CD8-positive, alpha-beta T cell (primary cell): ENCODE measurements at regions of chr7 and their contacts with region 1.

Region 1: GRCh38 chr7:157432957-157433576 is 96.3 kb downstream of the DNAJB6 start:
- DNase-seq: peak; percentile 24 to 83 (median 60)
- ATAC-seq: peak; percentile 87
- H3K4me3 ChIP-seq: peak overlapping the region; percentile 14 to 25
- H3K4me3 Mint-ChIP-seq: peak overlapping the region; percentile 55
- H3K27ac ChIP-seq: no peak overlapping the region
- H3K27ac Mint-ChIP-seq: no peak overlapping the region
- H3K4me1 ChIP-seq: peaks cover 11% of the 10 kb centered on the region
- H3K4me1 Mint-ChIP-seq: peaks cover 13% of the 10 kb centered on the region
- H3K27me3 ChIP-seq: no peaks in the 10 kb centered on the region
- H3K27me3 Mint-ChIP-seq: no peaks in the 10 kb centered on the region
- CTCF ChIP-seq: peak; percentile 67

Region 2: DNA sequence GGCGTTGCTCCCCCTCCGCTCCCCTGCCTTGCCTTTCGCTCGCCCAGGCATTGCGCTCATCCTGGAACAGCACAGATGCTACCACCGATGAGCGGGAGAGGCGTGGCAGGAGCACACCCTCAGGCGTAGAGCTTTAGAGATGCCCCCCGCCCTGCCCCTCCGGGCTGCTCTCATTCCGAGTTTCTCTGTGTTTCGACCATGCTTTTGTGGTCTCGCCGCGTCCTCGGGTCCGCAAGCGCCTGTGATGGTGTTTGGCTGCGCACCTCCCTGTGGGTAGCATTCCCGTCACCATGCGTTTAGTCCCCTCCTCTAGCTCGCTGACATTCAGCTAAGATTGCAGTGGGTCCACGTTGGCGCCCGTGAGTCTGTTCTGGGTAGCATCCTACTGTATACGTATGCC is 464.9 kb before region 1 on chr7:
- CTCF ChIA-PET with region 1: no interaction called
- POLR2A ChIA-PET with region 1: no interaction called
- intact Hi-C with region 1: no loop called
- DNase-seq: no peak
- ATAC-seq: no peak
- H3K4me3 ChIP-seq: no peak overlapping the region
- H3K4me3 Mint-ChIP-seq: no peak overlapping the region
- H3K27ac ChIP-seq: no peak overlapping the region
- H3K27ac Mint-ChIP-seq: no peak overlapping the region
- H3K4me1 ChIP-seq: no peaks in the 10 kb centered on the region
- H3K4me1 Mint-ChIP-seq: no peaks in the 10 kb centered on the region
- H3K27me3 ChIP-seq: no peaks in the 10 kb centered on the region
- H3K27me3 Mint-ChIP-seq: no peaks in the 10 kb centered on the region
- CTCF ChIP-seq: no peak

Region 3: DNA sequence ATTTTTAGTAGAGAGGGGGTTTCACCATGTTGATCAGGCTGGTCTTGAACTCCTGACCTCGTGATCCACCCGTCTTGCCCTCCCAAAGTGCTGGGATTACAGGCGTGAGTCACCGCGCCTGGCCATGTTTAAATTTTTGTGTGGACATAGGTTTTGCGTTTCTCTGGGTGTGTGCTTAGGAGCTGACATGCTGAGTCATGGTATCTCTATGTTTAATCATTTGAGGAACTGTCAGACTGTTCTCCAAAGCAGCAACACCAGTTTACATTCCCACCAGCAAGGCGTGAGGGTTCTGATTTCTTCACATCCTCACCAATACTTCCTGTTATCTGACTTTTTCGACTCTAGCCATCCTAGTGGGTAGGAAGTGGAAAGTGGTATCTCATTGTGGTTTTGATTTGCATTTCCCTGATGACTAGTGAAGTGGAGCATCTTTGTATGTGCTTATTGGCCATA is 57.4 kb after region 1 on chr7:
- CTCF ChIA-PET with region 1: interaction called, 6 read pairs
- POLR2A ChIA-PET with region 1: no interaction called
- intact Hi-C with region 1: loop called in 1 of 2 experiments (anchors 1 kb)
- DNase-seq: peak in 7 of 9 experiments; percentile 30 to 88 (median 54)
- ATAC-seq: peak; percentile 89
- H3K4me3 ChIP-seq: no peak overlapping the region
- H3K4me3 Mint-ChIP-seq: peak overlapping the region; percentile 27
- H3K27ac ChIP-seq: no peak overlapping the region
- H3K27ac Mint-ChIP-seq: peak overlapping the region; percentile 84
- H3K4me1 ChIP-seq: peaks cover 21% of the 10 kb centered on the region
- H3K4me1 Mint-ChIP-seq: peaks cover 29% of the 10 kb centered on the region
- H3K27me3 ChIP-seq: peaks cover 0 to 3% of the 10 kb centered on the region in 2 experiments
- H3K27me3 Mint-ChIP-seq: no peaks in the 10 kb centered on the region
- CTCF ChIP-seq: no peak

Region 4: GRCh38 chr7:157612664-157613561 is 179.8 kb after region 1 on chr7:
- CTCF ChIA-PET with region 1: interaction called, 3 read pairs
- POLR2A ChIA-PET with region 1: no interaction called
- intact Hi-C with region 1: loop called in 1 of 2 experiments (anchors 10 kb)
- DNase-seq: peak; percentile 32 to 85 (median 74)
- ATAC-seq: peak; percentile 79
- H3K4me3 ChIP-seq: peak overlapping the region; percentile 58 to 70
- H3K4me3 Mint-ChIP-seq: peak overlapping the region; percentile 87
- H3K27ac ChIP-seq: peak overlapping the region in 1 of 2 experiments; percentile 53
- H3K27ac Mint-ChIP-seq: peak overlapping the region; percentile 80
- H3K4me1 ChIP-seq: peaks cover 19% of the 10 kb centered on the region
- H3K4me1 Mint-ChIP-seq: peaks cover 20% of the 10 kb centered on the region
- H3K27me3 ChIP-seq: no peaks in the 10 kb centered on the region
- H3K27me3 Mint-ChIP-seq: no peaks in the 10 kb centered on the region
- CTCF ChIP-seq: no peak

Region 5: DNA sequence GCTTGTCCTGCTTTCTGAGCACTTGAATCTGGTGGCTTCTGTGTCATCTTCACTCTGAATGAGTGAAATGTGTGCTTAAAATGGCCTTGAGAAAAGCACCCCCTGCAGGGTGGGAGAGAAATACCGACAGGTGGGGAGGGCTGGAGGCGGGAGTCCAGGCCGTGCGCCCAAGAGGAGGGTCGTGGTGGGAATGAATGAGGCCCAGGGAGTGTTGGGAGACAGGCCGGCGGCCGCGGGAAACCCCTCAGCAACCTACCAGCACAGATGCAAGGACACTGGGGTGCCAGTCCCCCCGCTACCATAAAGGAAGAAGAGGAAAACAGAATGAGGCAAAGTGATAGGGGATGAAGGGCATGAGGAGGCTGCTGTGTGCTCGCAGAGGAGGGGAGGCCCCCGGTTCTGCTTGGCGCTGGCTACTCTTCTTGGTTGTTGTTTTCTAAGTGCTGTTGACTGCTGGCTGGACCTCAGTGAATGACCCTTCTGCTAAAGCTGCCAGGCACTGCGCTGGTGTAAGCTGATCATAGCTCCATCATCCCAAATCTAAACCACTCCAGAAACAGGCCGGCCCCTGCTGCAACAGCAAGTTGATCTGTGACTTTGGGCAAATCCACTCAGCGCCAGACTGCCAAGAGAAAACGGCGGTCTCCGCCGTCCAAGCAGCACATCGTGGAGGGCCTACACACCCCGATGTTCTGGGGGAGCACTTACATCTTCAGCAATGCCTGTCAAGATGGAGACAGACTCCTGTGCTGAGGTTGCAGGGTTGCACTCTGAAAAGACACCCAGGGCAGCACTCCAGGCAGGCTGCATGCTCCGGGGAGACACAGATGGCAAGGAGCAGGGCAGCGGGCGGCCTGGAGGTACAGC is 282.2 kb after region 1 on chr7:
- CTCF ChIA-PET with region 1: interaction called, 6 read pairs
- POLR2A ChIA-PET with region 1: no interaction called
- intact Hi-C with region 1: loop called (anchors 1 to 2 kb)
- DNase-seq: peak in 1 of 9 experiments; percentile 30
- ATAC-seq: no peak
- H3K4me3 ChIP-seq: no peak overlapping the region
- H3K4me3 Mint-ChIP-seq: no peak overlapping the region
- H3K27ac ChIP-seq: no peak overlapping the region
- H3K27ac Mint-ChIP-seq: no peak overlapping the region
- H3K4me1 ChIP-seq: no peaks in the 10 kb centered on the region
- H3K4me1 Mint-ChIP-seq: no peaks in the 10 kb centered on the region
- H3K27me3 ChIP-seq: no peaks in the 10 kb centered on the region
- H3K27me3 Mint-ChIP-seq: peaks cover 2% of the 10 kb centered on the region
- CTCF ChIP-seq: no peak